ENCODE measurements at regions of chr11 and their contacts with region 1.

Region 1: GRCh38 chr11:128884703-128885338 is 6.3 kb upstream of the KCNJ5 start:
- DNase-seq: no peak
- ATAC-seq: peak; percentile 78 to 91
- H3K4me3 ChIP-seq: no peak overlapping the region
- H3K27ac ChIP-seq: no peak overlapping the region
- H3K4me1 ChIP-seq: peaks cover 4% of the 10 kb centered on the region
- H3K27me3 ChIP-seq: peaks cover 4% of the 10 kb centered on the region
- CTCF ChIP-seq: peak; percentile 85

Region 2: GRCh38 chr11:128757235-128757711 is 127.5 kb before region 1 on chr11:
- intact Hi-C with region 1: no loop called
- DNase-seq: peak; percentile 61
- ATAC-seq: peak; percentile 78 to 86
- H3K4me3 ChIP-seq: no peak overlapping the region
- H3K27ac ChIP-seq: peak overlapping the region; percentile 34
- H3K4me1 ChIP-seq: peaks cover 17% of the 10 kb centered on the region
- H3K27me3 ChIP-seq: no peaks in the 10 kb centered on the region
- CTCF ChIP-seq: peak; percentile 50

Region 3: DNA sequence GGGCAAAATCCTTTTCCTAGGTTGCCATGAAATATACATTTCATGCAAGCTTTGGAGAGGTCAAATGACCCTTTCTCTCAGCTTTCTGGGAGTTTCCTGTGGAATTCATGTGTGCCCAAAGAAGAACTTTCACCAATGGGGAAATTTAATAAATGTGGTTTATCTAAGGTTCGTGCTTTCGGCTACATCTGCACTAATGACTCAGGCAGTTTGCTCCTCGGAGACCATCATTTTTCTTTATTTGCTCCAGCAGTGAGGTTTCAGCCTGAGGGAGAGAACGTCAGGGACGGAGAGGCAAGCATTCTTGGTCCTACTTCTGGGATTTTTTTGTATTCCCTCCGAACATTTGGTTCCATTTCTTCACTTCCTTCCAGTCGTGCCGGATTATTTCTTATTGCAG is 105.8 kb before region 1 on chr11:
- intact Hi-C with region 1: no loop called
- DNase-seq: no peak
- ATAC-seq: no peak
- H3K4me3 ChIP-seq: no peak overlapping the region
- H3K27ac ChIP-seq: no peak overlapping the region
- H3K4me1 ChIP-seq: peaks cover 12% of the 10 kb centered on the region
- H3K27me3 ChIP-seq: no peaks in the 10 kb centered on the region
- CTCF ChIP-seq: no peak

Region 4: GRCh38 chr11:128928400-128928799 is 43.6 kb after region 1 on chr11:
- intact Hi-C with region 1: no loop called
- DNase-seq: no peak
- ATAC-seq: no peak
- H3K4me3 ChIP-seq: no peak overlapping the region
- H3K27ac ChIP-seq: no peak overlapping the region
- H3K4me1 ChIP-seq: no peaks in the 10 kb centered on the region
- H3K27me3 ChIP-seq: no peaks in the 10 kb centered on the region
- CTCF ChIP-seq: no peak

Region 5: DNA sequence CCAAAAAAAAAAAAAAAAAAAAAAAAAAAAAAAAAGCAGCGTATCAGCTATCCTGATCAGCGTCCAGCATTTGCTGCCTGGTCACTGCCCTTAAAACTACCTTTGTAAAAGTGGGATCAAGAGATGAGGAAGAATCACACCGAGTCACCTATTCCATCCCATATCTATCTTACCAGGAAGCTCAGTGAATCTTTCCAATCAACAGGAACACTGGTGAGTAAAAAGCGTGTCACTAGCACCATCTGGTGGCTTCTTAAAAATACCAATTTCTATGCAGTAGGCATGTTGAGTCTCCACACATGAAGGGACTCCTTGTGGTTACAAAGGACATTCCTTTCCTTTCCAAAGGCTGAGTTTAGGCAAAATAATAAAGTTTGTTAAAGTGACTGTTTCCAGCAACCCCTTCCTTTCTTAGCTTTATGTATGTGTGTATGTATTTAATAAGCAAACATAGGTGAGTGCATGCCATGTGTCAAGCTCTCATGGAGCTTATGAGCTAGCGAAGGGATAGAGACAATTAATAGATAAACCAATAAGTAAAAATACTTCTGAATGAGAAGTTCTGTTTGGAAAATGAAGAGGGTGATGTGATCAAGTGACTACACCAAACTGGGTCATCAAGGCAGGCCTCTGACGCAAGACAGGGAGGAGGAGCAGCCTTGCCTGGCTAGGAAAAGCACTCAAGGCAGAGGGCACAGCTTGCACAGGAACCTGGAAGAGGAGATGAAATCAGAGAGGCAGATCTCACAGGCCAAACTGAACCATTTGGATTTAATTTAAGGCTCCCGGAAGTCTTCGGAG is 71.8 kb after region 1 on chr11:
- intact Hi-C with region 1: loop called (anchors 5 kb)
- DNase-seq: no peak
- ATAC-seq: peak; percentile 68 to 83
- H3K4me3 ChIP-seq: no peak overlapping the region
- H3K27ac ChIP-seq: no peak overlapping the region
- H3K4me1 ChIP-seq: no peaks in the 10 kb centered on the region
- H3K27me3 ChIP-seq: no peaks in the 10 kb centered on the region
- CTCF ChIP-seq: peak; percentile 67

Region 6: DNA sequence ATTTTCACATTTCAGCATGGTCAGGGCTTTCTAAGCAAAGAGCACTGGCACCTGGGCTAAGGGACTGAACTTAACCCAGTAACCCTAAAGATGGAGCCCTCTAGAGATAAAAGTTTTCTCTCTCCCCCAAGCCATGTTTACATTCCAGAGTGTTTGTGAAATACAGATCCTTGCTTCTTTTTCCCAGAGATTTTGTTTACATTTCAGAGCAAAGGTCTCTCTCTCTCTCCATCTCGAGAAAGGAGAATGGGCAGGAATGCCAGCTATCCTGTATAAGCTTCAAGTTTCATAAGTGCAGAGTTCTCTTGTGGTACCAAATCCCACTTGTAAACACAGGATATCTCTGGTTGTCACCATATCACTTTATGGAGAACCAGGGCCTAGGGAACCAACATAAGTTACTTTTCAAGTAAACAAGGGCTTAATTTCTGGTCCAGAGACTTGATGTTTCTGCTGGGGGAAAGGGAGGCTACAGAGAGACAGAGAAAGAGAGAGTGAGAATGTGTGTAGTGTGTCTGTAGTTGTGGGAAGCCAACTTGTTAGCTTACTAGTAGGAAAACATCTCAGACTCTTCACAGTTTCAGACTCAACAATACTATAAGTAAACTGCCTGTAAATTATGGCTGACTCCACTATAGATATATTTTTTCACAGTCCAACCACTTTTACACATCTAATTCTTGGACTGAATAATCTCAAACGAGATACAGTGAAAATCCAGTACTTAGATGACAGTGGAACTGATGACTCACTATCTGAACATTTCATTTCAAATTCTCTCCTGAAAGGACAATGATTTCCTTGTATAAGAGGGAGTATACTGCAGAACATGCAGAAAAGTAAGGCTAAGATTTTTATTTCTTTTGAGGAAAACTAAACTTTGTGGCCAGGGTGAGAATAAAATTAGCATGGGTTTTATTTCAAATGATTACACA is 231.1 kb after region 1 on chr11:
- intact Hi-C with region 1: no loop called
- DNase-seq: no peak
- ATAC-seq: no peak
- H3K4me3 ChIP-seq: no peak overlapping the region
- H3K27ac ChIP-seq: no peak overlapping the region
- H3K4me1 ChIP-seq: no peaks in the 10 kb centered on the region
- H3K27me3 ChIP-seq: no peaks in the 10 kb centered on the region
- CTCF ChIP-seq: no peak

Measured in lower lobe of right lung (tissue), 2 donors.